K562 (cell line): ENCODE measurements at regions of chr1 and their contacts with region 1.

Region 1: GRCh38 chr1:40763742-40764532 is 19.6 kb upstream of the KCNQ4 start:
- DNase-seq: no peak
- ATAC-seq: no peak
- H3K4me3 ChIP-seq: no peak overlapping the region
- H3K27ac ChIP-seq: no peak overlapping the region
- H3K4me1 ChIP-seq: no peaks in the 10 kb centered on the region; a peak in 1 of 5 replicates
- H3K27me3 ChIP-seq: no peaks in the 10 kb centered on the region
- CTCF ChIP-seq: no peak
- EP300 ChIP-seq: no peak
- POLR2A ChIP-seq: no peak
- RAD21 ChIP-seq: no peak

Region 2: GRCh38 chr1:40774266-40774998 is 10.5 kb after region 1 on chr1:
- CTCF ChIA-PET with region 1: no interaction called
- POLR2A ChIA-PET with region 1: interaction called, 10 read pairs
- in situ Hi-C with region 1: no loop called
- intact Hi-C with region 1: no loop called
- DNase-seq: peak; percentile 77 to 87 (median 82)
- ATAC-seq: peak; percentile 96
- H3K4me3 ChIP-seq: no peak overlapping the region
- H3K27ac ChIP-seq: peak overlapping the region; percentile 49
- H3K4me1 ChIP-seq: peaks cover 0 to 14% of the 10 kb centered on the region in 2 experiments; a peak in 4 of 5 replicates
- H3K27me3 ChIP-seq: no peaks in the 10 kb centered on the region
- CTCF ChIP-seq: peak; percentile 93 to 98 (median 94)
- EP300 ChIP-seq: peak; percentile 51; the same call in 1 of the 2 replicates
- POLR2A ChIP-seq: no peak
- RAD21 ChIP-seq: peak; percentile 90 to 94